Psoas muscle (tissue), 8 donors: ENCODE measurements at regions of chr6 and their contacts with region 1.

Region 1: GRCh38 chr6:69917834-69918233 is 51.5 kb downstream of the COL19A1 start:
- DNase-seq: peak in 1 of 2 donors; percentile 29
- ATAC-seq: peak; percentile 84 to 92 (median 90)
- H3K4me3 ChIP-seq: no peak overlapping the region
- H3K27ac ChIP-seq: peak overlapping the region; percentile 81
- H3K4me1 ChIP-seq: peaks cover 15% of the 10 kb centered on the region
- H3K27me3 ChIP-seq: no peaks in the 10 kb centered on the region
- CTCF ChIP-seq: no peak

Region 2: GRCh38 chr6:69408886-69409285 is 508.9 kb before region 1 on chr6:
- intact Hi-C with region 1: no loop called
- DNase-seq: no peak
- ATAC-seq: no peak
- H3K4me3 ChIP-seq: no peak overlapping the region
- H3K27ac ChIP-seq: no peak overlapping the region
- H3K4me1 ChIP-seq: no peaks in the 10 kb centered on the region
- H3K27me3 ChIP-seq: no peaks in the 10 kb centered on the region
- CTCF ChIP-seq: no peak

Region 3: GRCh38 chr6:69848552-69848951 is 69.3 kb before region 1 on chr6:
- intact Hi-C with region 1: loop called in 1 of 2 experiments (anchors 5 kb)
- DNase-seq: no peak
- ATAC-seq: peak; percentile 67 to 87 (median 80)
- H3K4me3 ChIP-seq: no peak overlapping the region
- H3K27ac ChIP-seq: peak overlapping the region; percentile 65
- H3K4me1 ChIP-seq: peaks cover 17% of the 10 kb centered on the region
- H3K27me3 ChIP-seq: no peaks in the 10 kb centered on the region
- CTCF ChIP-seq: no peak

Region 4: DNA sequence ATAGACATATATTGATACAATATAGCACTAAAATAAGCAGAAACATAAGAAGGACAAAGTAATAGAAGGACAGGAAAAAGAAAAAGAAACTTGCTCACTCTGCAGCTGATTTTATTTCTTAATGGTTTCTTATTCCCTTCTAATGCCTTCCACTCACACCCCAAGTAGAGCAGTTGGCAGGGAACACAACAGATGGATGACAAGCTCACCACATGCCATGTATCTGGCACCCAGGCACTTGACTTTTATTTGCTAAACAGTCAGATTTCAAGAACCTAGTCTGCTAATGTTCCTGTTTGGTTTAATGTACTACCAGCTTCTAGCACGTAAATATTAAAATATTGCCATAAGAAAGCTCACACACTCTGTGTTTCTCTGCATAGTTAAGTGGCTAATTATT is 35.7 kb after region 1 on chr6:
- intact Hi-C with region 1: loop called in 1 of 2 experiments (anchors 5 kb)
- DNase-seq: no peak
- ATAC-seq: peak in 3 of 4 donors; percentile 35 to 59 (median 59)
- H3K4me3 ChIP-seq: no peak overlapping the region
- H3K27ac ChIP-seq: peak overlapping the region; percentile 44
- H3K4me1 ChIP-seq: peaks cover 49% of the 10 kb centered on the region
- H3K27me3 ChIP-seq: no peaks in the 10 kb centered on the region
- CTCF ChIP-seq: no peak